ENCODE measurements at regions of chr12 and their contacts with region 1.

Region 1: DNA sequence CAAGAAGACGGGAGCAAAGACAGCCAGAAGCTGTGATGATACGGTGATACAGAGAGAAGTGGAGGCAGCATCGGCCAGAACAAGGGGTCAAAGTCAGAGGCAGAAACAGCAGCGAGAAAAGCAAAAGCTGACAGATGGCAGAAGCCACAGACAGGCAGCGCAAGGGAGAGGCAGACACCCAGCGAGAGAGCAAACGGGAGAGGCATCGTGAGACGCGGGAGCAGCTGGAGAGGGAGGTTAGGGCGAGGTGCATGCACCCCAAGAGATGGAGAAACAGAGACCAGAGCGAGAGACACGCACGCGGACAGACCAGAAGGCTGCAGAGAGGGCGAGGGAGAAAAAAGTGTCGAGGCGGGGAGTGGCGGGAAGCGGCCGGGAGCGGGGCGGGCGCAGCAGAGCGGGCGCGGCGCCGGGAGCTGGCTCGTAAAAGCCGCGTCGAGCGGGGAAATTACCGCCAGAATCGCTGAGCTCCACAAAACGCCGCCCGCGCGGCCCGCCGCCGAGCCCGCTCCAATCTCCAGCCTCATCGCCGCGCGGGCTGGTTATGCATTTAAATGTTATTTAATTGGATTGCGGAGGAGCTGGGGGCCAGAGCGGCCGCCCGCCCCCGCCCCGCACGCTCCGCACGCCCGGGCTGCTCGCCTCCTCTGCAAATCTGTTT is 15.6 kb downstream of the SMUG1 start:
- DNase-seq: peak in 1 of 2 experiments; percentile 17
- H3K4me3 ChIP-seq: no peak overlapping the region
- H3K27ac ChIP-seq: no peak overlapping the region
- H3K4me1 ChIP-seq: no peaks in the 10 kb centered on the region
- H3K27me3 ChIP-seq: no peaks in the 10 kb centered on the region
- CTCF ChIP-seq: no peak

Region 2: DNA sequence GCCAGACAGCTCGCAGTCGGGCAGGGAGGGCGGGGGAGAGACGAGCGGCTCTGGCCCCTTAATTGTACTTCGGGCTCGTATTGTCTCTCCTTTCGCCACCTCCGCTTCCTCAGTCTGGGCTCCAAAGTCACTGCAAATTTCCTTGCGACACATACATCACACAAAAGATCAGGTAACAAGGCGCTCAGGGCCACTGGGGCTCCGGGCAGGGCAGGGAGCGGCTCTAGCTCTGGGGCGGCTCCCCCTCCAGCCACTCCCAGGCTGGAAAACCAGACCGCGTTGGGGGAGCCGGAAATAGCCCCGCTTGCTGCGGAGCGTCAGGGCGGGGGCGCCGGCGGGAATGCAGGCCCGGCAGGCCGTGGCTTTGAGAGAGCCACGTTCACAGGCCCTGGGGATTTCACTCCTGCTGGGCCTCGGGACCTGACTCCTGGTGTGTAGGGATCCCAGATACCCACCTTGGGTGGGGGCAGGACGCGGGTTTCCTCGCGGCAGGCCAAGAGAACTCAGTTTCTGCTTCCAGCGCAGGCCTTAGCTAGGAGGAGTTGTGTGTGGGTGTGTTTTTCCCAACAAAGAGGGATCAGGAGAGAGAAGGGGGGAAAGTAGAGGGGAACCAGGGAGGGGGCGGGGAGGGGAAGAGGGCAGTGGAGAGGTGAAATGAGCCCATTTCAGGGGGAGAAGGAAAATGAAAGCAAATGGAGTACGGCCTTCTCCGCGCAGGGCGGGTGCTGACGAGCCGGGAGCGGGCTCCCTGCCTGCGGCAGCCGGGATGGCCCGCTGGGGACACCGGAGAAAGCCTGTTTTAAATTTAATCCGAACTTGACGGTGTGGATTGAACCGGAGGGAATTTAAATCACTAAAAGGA is 177.6 kb before region 1 on chr12:
- CTCF ChIA-PET with region 1: no interaction called
- POLR2A ChIA-PET with region 1: interaction called, 44 read pairs
- intact Hi-C with region 1: no loop called
- DNase-seq: peak; percentile 91
- H3K4me3 ChIP-seq: peak overlapping the region; percentile 86
- H3K27ac ChIP-seq: peak overlapping the region; percentile 89
- H3K4me1 ChIP-seq: peaks cover 19% of the 10 kb centered on the region; the same call in 1 of the 2 replicates
- H3K27me3 ChIP-seq: no peaks in the 10 kb centered on the region
- CTCF ChIP-seq: no peak

Measured in PC-9 (cell line).